Naive thymus-derived CD4-positive, alpha-beta T cell (primary cell): ENCODE measurements at regions of chr19 and their contacts with region 1.

Region 1: GRCh38 chr19:40798223-40798996 is 581 bp upstream of the EGLN2 start:
- DNase-seq: peak; percentile 48 to 100 (median 100)
- ATAC-seq: peak; percentile 92
- H3K4me3 ChIP-seq: peak overlapping the region; percentile 77
- H3K4me3 Mint-ChIP-seq: peak overlapping the region; percentile 89 to 100 (median 95)
- H3K27ac ChIP-seq: peak overlapping the region; percentile 90
- H3K27ac Mint-ChIP-seq: peak overlapping the region; percentile 96 to 100 (median 99)
- H3K4me1 ChIP-seq: peaks cover 35 to 39% of the 10 kb centered on the region in 2 donors
- H3K4me1 Mint-ChIP-seq: peaks cover 28 to 56% (median 48%) of the 10 kb centered on the region in 7 donors
- H3K27me3 ChIP-seq: no peaks in the 10 kb centered on the region
- H3K27me3 Mint-ChIP-seq: no peaks in the 10 kb centered on the region

Region 2: DNA sequence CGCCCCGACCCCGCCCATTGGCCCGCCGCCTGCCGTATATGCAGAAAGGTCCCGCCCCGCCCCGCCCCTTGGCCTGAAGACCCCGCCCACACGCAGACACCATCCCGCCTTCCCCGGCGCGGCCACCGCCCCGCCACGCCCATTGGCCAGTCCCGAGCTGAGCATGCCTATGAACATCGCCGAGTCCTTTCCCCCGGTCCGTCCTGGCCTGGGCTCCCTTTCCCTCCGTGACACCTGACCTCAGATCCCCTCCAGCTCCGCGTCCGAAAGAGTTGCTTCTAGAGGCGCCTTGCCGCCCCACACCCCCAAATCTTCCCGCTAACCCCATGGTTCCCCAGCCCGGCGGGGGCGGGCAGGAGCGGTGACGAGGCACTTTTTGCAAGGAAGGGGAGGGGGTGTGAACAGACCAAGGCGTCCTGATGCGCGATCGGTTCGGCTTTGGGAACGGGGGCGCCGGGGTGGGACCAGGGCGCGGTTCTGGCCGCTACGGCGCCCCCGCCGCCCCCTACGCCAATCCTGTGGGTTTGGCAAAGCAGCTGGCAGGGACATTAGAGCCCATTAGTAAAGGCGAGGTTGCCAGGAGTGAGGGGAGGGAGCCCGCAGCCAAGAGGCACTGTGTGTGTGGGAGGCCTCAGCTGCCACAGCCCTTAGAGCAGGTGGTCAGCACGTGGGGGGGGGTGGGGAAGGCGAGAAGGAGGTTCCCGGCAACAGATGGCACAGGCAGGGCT is 107.6 kb before region 1 on chr19:
- CTCF ChIA-PET with region 1: no interaction called
- POLR2A ChIA-PET with region 1: no interaction called
- intact Hi-C with region 1: loop called (anchors 1 to 2 kb)
- DNase-seq: peak; percentile 60 to 90 (median 75)
- ATAC-seq: peak; percentile 92
- H3K4me3 ChIP-seq: peak overlapping the region; percentile 68
- H3K4me3 Mint-ChIP-seq: peak overlapping the region in 9 of 10 donors; percentile 78 to 96 (median 91)
- H3K27ac ChIP-seq: peak overlapping the region; percentile 55
- H3K27ac Mint-ChIP-seq: peak overlapping the region in 8 of 9 donors; percentile 58 to 94 (median 74)
- H3K4me1 ChIP-seq: peaks cover 0 to 6% of the 10 kb centered on the region in 2 donors
- H3K4me1 Mint-ChIP-seq: peaks cover 0 to 6% (median 4%) of the 10 kb centered on the region in 7 donors
- H3K27me3 ChIP-seq: no peaks in the 10 kb centered on the region
- H3K27me3 Mint-ChIP-seq: no peaks in the 10 kb centered on the region

Region 3: DNA sequence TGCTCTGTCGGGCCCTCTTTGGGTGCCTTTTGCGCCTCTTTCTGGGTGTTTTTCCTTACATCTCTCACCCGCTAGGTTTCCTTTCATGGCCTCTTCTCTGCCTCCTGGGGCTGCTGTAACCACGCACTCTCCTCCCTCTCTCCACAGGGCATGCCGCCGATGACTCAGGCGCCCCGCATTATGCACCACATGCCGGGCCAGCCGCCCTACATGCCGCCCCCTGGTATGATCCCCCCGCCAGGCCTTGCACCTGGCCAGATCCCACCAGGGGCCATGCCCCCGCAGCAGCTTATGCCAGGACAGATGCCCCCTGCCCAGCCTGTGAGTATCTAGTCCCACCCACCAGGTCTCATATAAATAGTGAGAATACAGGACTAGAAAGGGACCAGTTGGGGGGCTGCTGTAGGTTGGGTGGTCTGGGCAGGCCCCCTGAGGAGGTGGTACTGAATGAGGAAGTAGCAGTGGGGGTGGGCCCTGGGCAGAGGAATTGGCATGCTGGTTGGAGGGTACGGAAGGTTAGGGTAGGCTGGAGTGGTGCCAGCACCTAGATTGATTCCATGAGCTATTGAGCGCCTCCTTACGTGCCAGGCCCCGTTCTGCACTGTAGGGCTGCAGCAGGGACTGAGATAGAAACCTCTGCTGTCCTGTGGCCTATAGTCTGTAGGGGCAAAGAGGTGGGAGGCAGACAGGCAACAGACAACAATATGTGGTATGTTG is 35.5 kb before region 1 on chr19:
- CTCF ChIA-PET with region 1: no interaction called
- POLR2A ChIA-PET with region 1: no interaction called
- intact Hi-C with region 1: no loop called
- DNase-seq: no peak
- ATAC-seq: no peak
- H3K4me3 ChIP-seq: no peak overlapping the region
- H3K4me3 Mint-ChIP-seq: no peak overlapping the region
- H3K27ac ChIP-seq: no peak overlapping the region
- H3K27ac Mint-ChIP-seq: peak overlapping the region in 5 of 9 donors; percentile 20 to 74 (median 53)
- H3K4me1 ChIP-seq: peaks cover 8 to 17% of the 10 kb centered on the region in 2 donors
- H3K4me1 Mint-ChIP-seq: peaks cover 10 to 52% (median 43%) of the 10 kb centered on the region in 7 donors
- H3K27me3 ChIP-seq: no peaks in the 10 kb centered on the region
- H3K27me3 Mint-ChIP-seq: no peaks in the 10 kb centered on the region

Region 4: GRCh38 chr19:40813182-40813958 is 15.0 kb after region 1 on chr19:
- CTCF ChIA-PET with region 1: interaction called, 15 read pairs
- POLR2A ChIA-PET with region 1: interaction called, 39 read pairs
- intact Hi-C with region 1: no loop called
- DNase-seq: no peak
- ATAC-seq: no peak
- H3K4me3 ChIP-seq: no peak overlapping the region
- H3K4me3 Mint-ChIP-seq: peak overlapping the region in 9 of 10 donors; percentile 9 to 100 (median 91)
- H3K27ac ChIP-seq: no peak overlapping the region
- H3K27ac Mint-ChIP-seq: peak overlapping the region in 5 of 9 donors; percentile 13 to 90 (median 86)
- H3K4me1 ChIP-seq: peaks cover 8 to 20% of the 10 kb centered on the region in 2 donors
- H3K4me1 Mint-ChIP-seq: peaks cover 33 to 55% (median 52%) of the 10 kb centered on the region in 7 donors
- H3K27me3 ChIP-seq: no peaks in the 10 kb centered on the region
- H3K27me3 Mint-ChIP-seq: peaks cover 0 to 42% (median 0%) of the 10 kb centered on the region in 5 donors

Region 5: DNA sequence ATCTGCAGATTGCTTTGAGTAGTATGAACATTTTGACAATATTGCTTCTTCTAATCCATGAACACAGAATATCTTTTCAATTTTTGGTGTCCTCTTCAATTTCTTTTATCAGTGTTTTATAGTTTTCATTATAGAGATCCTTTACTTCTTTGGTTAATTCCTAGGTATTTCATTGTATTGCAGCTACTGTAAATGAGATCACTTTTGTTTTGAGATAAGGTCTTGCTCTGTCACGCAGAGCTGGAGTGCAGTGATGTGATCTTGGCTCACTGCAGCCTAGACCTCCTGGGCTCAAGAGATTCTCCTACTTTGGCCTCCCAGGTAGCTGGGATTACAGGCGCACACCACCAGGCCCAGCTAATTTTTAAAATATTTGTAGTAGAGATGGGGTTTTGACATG is 73.8 kb after region 1 on chr19:
- CTCF ChIA-PET with region 1: no interaction called
- POLR2A ChIA-PET with region 1: no interaction called
- intact Hi-C with region 1: loop called in 1 of 2 experiments (anchors 1 kb)
- DNase-seq: no peak
- ATAC-seq: no peak
- H3K4me3 ChIP-seq: no peak overlapping the region
- H3K4me3 Mint-ChIP-seq: no peak overlapping the region
- H3K27ac ChIP-seq: no peak overlapping the region
- H3K27ac Mint-ChIP-seq: no peak overlapping the region
- H3K4me1 ChIP-seq: peaks cover 0 to 9% of the 10 kb centered on the region in 2 donors
- H3K4me1 Mint-ChIP-seq: peaks cover 10 to 19% (median 14%) of the 10 kb centered on the region in 7 donors
- H3K27me3 ChIP-seq: no peaks in the 10 kb centered on the region
- H3K27me3 Mint-ChIP-seq: peaks cover 0 to 58% (median 7%) of the 10 kb centered on the region in 5 donors

Region 6: DNA sequence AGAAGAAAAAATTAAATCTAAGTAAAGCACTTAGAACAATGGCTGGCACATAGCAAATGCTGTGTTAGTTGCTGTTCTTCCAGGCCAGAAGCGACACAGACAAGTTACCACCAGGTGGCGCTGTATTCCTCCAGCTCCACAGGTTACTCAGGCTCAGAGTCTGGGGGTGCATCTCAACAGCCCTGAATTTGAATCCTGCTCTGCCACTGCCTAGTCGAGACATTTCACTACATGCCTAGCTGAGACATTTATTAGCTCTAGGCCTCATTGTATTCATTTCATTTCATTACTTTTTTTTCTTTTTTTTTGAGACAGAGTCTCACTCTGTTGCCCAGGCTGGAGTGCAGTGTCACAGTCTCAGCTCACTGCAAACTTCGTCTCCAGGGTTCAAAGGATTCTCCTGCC is 176.2 kb after region 1 on chr19:
- CTCF ChIA-PET with region 1: no interaction called
- POLR2A ChIA-PET with region 1: no interaction called
- intact Hi-C with region 1: loop called in 1 of 2 experiments (anchors 1 kb)
- DNase-seq: peak; percentile 54 to 84 (median 76)
- ATAC-seq: peak; percentile 87
- H3K4me3 ChIP-seq: no peak overlapping the region
- H3K4me3 Mint-ChIP-seq: peak overlapping the region in 1 of 10 donors; percentile 45
- H3K27ac ChIP-seq: no peak overlapping the region
- H3K27ac Mint-ChIP-seq: peak overlapping the region in 3 of 9 donors; percentile 53 to 74 (median 63)
- H3K4me1 ChIP-seq: peaks cover 16 to 19% of the 10 kb centered on the region in 2 donors
- H3K4me1 Mint-ChIP-seq: peaks cover 13 to 53% (median 27%) of the 10 kb centered on the region in 7 donors
- H3K27me3 ChIP-seq: no peaks in the 10 kb centered on the region
- H3K27me3 Mint-ChIP-seq: peaks cover 2 to 38% (median 3%) of the 10 kb centered on the region in 5 donors